Stomach (tissue), 19 donors: ENCODE measurements at regions of chr3 and their contacts with region 1.

Region 1: DNA sequence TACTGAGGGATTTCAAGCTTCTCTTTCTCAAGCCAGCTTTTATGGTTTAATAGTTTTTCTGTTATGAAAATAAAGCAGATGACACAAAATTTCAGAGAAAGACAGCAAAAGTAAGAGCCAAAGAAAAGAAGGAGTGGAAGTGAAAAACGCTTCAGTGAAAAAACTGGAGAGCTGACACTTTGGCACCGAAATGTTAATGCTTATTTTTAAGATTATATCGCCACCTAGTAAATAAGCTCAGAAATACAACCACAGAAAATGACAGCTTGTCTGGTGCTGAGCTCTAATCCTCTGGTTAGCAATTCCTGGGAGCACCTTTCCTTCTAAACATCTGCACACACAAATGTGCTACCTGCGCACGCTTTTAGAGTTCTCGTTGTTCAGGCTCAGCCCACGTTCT is 101.6 kb downstream of the ZPLD1 start:
- DNase-seq: peak in 1 of 2 donors; percentile 69
- H3K4me3 ChIP-seq: no peak overlapping the region
- H3K27ac ChIP-seq: no peak overlapping the region
- H3K4me1 ChIP-seq: peaks cover 0 to 6% (median 0%) of the 10 kb centered on the region in 4 donors
- H3K27me3 ChIP-seq: no peaks in the 10 kb centered on the region
- CTCF ChIP-seq: peak in 4 of 7 experiments; percentile 13 to 45 (median 30)
- EP300 ChIP-seq: no peak
- POLR2A ChIP-seq: no peak

Region 2: DNA sequence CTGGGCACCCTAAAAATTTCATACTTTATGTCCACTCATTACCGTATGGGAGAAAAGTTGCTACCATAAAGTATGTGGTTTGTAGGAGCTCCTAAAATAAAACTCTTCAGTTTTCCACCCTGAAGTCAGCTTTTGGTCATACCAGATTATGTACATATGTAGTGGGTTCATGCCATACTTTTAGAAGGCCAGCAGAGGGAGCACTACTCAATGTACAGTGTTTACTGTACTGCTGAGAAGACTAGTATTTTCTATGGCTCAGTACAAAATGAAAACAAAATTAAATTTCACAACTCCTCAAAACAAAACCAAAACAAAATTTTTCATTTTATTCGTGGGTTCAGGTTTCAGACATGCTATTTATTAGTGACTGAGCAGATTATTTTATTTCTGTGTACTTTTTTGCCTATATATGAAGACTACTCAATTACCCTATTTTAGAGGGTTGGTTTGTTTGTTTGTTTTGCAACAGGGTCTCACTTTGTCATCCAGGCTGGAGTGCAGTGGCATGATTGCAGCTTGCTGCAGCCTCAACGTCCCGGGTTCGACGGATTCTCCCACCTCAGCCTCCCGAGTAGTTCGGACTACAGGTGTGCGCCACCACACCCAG is 733.2 kb before region 1 on chr3:
- intact Hi-C with region 1: loop called (anchors 10 kb)
- DNase-seq: peak; percentile 42 to 89
- H3K4me3 ChIP-seq: no peak overlapping the region
- H3K27ac ChIP-seq: no peak overlapping the region
- H3K4me1 ChIP-seq: peaks cover 0 to 11% (median 0%) of the 10 kb centered on the region in 4 donors
- H3K27me3 ChIP-seq: no peaks in the 10 kb centered on the region
- CTCF ChIP-seq: peak in 5 of 7 experiments; percentile 69 to 86 (median 81)
- EP300 ChIP-seq: no peak
- POLR2A ChIP-seq: no peak

Region 3: DNA sequence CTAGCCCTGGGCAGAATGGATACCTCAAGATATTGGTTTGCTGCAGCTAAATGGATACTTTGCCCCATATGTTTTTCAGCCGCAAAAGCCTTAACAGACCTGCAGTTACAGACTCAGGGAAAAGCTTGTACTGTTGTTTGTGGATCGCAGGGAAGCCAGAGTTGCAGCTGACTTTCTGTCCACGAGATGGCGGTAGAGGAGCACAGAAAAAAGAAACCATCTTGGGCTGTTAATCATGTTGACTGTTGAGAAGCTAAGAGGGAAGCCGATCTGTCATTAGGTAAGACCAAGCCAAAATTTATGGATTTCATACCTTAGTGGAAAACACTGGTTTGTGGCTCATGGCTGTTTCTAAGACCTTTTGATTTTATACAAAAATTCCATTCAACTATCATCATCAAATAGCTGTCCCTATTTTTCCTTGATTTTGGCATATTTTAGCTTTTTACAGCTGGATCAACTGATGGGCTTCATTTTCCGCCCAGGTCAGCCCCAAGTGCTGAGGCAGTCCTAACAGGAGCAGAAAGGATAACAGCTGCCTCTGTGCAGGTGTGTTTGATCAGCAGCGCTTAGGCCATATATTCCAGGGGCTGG is 307.3 kb before region 1 on chr3:
- intact Hi-C with region 1: loop called (anchors 5 kb)
- DNase-seq: peak; percentile 80 to 91
- H3K4me3 ChIP-seq: no peak overlapping the region
- H3K27ac ChIP-seq: no peak overlapping the region
- H3K4me1 ChIP-seq: peaks cover 0 to 18% (median 8%) of the 10 kb centered on the region in 4 donors
- H3K27me3 ChIP-seq: no peaks in the 10 kb centered on the region
- CTCF ChIP-seq: peak in 6 of 7 experiments; percentile 54 to 96 (median 90)
- EP300 ChIP-seq: no peak
- POLR2A ChIP-seq: no peak